K562 (cell line): ENCODE measurements at regions of chr1 and their contacts with region 1.

Region 1: DNA sequence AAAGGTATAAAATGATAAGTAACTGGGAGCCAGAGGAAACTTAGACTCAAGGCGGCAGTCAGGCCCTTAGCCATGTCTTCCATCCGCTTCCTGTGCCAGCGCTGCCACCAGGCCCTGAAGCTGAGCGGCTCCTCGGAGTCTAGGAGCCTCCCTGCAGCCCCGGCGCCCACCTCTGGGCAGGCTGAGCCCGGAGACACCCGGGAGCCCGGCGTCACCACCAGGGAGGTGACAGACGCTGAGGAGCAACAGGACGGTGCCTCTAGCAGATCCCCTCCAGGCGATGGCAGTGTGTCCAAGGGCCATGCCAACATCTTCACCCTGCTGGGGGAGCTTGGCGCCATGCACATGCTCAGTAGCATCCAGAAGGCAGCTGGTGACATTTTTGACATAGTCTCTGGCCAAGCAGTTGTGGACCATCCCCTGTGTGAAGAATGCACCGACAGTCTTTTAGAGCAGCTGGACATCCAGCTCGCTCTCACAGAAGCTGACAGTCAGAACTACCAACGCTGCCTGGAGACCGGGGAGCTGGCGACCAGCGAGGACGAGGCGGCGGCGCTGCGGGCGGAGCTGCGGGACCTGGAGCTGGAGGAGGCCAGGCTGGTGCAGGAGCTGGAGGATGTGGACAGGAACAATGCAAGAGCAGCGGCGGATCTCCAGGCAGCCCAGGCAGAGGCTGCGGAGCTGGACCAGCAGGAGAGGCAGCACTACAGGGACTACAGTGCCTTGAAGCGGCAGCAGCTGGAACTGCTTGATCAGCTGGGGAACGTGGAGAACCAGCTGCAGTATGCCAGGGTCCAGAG is at the start of gene BECN2:
- DNase-seq: peak in 3 of 4 experiments; percentile 16 to 58 (median 57)
- ATAC-seq: peak; percentile 96
- H3K4me3 ChIP-seq: no peak within 1 kb of the TSS
- H3K27ac ChIP-seq: no peak within 1 kb of the TSS
- H3K4me1 ChIP-seq: peaks cover 3 to 9% of the 10 kb centered on the region in 2 experiments; a peak in 2 of 5 replicates
- H3K27me3 ChIP-seq: peaks cover 29 to 48% of the 10 kb centered on the region in 2 experiments
- CTCF ChIP-seq: peak; percentile 61 to 78 (median 73)
- EP300 ChIP-seq: no peak
- POLR2A ChIP-seq: no peak
- RAD21 ChIP-seq: peak; percentile 41 to 82; a peak in 3 of 4 replicates
- polyA plus RNA-seq, gene BECN2: not detected

Region 2: GRCh38 chr1:241947354-241947753 is 10.5 kb before region 1 on chr1:
- CTCF ChIA-PET with region 1: no interaction called
- POLR2A ChIA-PET with region 1: no interaction called
- in situ Hi-C with region 1: no loop called
- intact Hi-C with region 1: no loop called
- DNase-seq: no peak
- ATAC-seq: peak; percentile 9
- H3K4me3 ChIP-seq: no peak overlapping the region
- H3K27ac ChIP-seq: no peak overlapping the region
- H3K4me1 ChIP-seq: peaks cover 0 to 2% of the 10 kb centered on the region in 2 experiments; a peak in 3 of 5 replicates
- H3K27me3 ChIP-seq: peaks cover 7 to 12% of the 10 kb centered on the region in 2 experiments; a peak in 4 of 5 replicates
- CTCF ChIP-seq: no peak
- EP300 ChIP-seq: no peak
- POLR2A ChIP-seq: no peak
- RAD21 ChIP-seq: no peak

Region 3: GRCh38 chr1:241985787-241986186 is 27.9 kb after region 1 on chr1:
- CTCF ChIA-PET with region 1: no interaction called
- POLR2A ChIA-PET with region 1: interaction called, 3 read pairs
- in situ Hi-C with region 1: no loop called
- intact Hi-C with region 1: loop called (anchors 5 kb)
- DNase-seq: peak; percentile 42 to 70 (median 50)
- ATAC-seq: peak; percentile 82
- H3K4me3 ChIP-seq: no peak overlapping the region
- H3K27ac ChIP-seq: no peak overlapping the region
- H3K4me1 ChIP-seq: no peaks in the 10 kb centered on the region; a peak in 1 of 5 replicates
- H3K27me3 ChIP-seq: peaks cover 20 to 25% of the 10 kb centered on the region in 2 experiments
- CTCF ChIP-seq: peak; percentile 58 to 75 (median 65)
- EP300 ChIP-seq: no peak
- POLR2A ChIP-seq: no peak
- RAD21 ChIP-seq: peak; percentile 48 to 72; a peak in 3 of 4 replicates

Region 4: GRCh38 chr1:242033447-242033846 is 75.6 kb after region 1 on chr1:
- CTCF ChIA-PET with region 1: no interaction called
- POLR2A ChIA-PET with region 1: no interaction called
- in situ Hi-C with region 1: no loop called
- intact Hi-C with region 1: no loop called
- DNase-seq: peak in 1 of 4 experiments; percentile 14
- ATAC-seq: no peak
- H3K4me3 ChIP-seq: no peak overlapping the region
- H3K27ac ChIP-seq: no peak overlapping the region
- H3K4me1 ChIP-seq: no peaks in the 10 kb centered on the region
- H3K27me3 ChIP-seq: peaks cover 15 to 23% of the 10 kb centered on the region in 2 experiments; a peak in 3 of 5 replicates
- CTCF ChIP-seq: no peak
- EP300 ChIP-seq: no peak
- POLR2A ChIP-seq: no peak
- RAD21 ChIP-seq: no peak